AG04450 (cell line): ENCODE measurements at regions of chr2 and their contacts with region 1.

Region 1: GRCh38 chr2:203238704-203239526 is at the start of gene CYP20A1:
- DNase-seq: peak; percentile 90
- H3K4me3 ChIP-seq: peak within 1 kb of the TSS; percentile 87
- H3K27ac ChIP-seq: peak within 1 kb of the TSS; percentile 98
- H3K27me3 ChIP-seq: no peaks in the 10 kb centered on the region
- CTCF ChIP-seq: peak; percentile 49; the same call in 1 of the 2 replicates
- polyA plus RNA-seq, gene CYP20A1: 15.0 and 17.8 TPM in 2 replicates

Region 2: DNA sequence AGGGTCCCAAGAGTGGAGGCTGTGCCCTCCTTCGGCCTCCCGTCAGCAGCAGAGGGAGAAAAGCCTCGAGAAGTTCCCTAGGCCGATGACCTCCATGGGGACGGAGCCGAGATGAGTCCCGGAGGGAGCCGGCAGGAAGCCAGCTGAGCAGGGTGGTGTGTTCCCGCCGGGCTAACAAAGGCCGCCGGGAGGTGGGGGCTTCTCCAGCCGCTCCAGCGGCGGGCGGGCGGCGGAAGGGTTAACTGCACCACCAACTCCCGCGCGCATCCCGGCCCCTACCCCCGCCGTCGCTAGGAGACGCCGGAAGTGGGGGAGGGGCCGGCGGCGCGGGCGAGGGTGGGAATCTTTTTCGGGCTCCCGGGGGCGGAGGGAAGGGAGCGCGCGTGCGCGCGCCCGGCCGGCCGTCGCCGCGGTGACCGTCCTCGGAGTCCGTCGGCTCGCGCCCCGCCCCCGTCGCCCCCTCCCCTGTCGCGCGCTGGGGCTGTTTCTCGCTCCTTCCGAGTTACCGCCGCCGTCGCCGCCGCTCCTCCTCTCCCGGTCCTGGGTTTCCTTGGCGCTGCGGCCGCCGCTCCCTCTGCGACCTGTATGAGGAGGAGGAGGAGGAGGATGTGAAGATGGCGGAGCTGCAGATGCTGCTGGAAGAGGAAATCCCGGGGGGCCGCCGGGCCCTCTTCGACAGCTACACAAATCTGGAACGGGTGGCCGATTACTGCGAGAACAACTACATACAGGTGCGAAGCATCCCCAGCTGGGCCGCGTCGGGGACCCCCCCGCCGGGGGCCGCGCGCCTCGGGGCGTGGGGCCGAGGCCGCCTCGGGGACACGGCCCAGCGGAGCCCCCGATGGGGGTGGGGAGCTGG is 89.2 kb after region 1 on chr2 and contains the start of gene ABI2:
- CTCF ChIA-PET with region 1: no interaction called
- POLR2A ChIA-PET with region 1: interaction called, 11 read pairs
- DNase-seq: no peak
- H3K4me3 ChIP-seq: peak within 1 kb of the TSS; percentile 64
- H3K27ac ChIP-seq: peak within 1 kb of the TSS; percentile 82
- H3K27me3 ChIP-seq: no peaks in the 10 kb centered on the region
- CTCF ChIP-seq: 0 out of 2 replicates have a peak, but pooled peaks have one; percentile 5
- polyA plus RNA-seq, gene ABI2: 35.7 and 42.5 TPM in 2 replicates

Region 3: GRCh38 chr2:203492965-203493364 is 254.1 kb after region 1 on chr2:
- CTCF ChIA-PET with region 1: no interaction called
- POLR2A ChIA-PET with region 1: no interaction called
- DNase-seq: no peak
- H3K4me3 ChIP-seq: no peak overlapping the region
- H3K27ac ChIP-seq: no peak overlapping the region
- H3K27me3 ChIP-seq: no peaks in the 10 kb centered on the region
- CTCF ChIP-seq: no peak